ENCODE measurements at regions of chr20 and their contacts with region 1.

Region 1: DNA sequence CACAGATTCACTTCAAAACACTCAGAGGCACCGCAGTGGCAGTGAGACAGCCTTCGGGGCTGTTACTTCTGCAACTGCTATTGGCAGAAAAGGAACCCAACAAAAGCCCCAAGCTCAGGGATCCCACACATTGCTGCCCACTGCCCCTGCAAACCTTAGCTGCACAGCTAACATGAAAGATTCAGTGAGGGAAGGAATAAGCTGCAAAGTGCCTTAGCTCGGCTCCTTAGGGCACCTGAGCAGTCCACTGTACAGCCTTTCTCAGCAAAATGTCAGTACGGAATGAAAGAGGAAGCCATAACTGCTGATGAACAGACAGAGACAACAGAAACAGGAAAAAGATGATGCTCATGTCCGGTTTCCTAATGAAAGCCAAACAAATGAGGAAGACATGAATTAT is 179.7 kb upstream of the SHLD1 start:
- DNase-seq: no peak
- H3K4me3 ChIP-seq: no peak overlapping the region
- H3K27ac ChIP-seq: no peak overlapping the region
- H3K4me1 ChIP-seq: no peaks in the 10 kb centered on the region
- H3K27me3 ChIP-seq: no peaks in the 10 kb centered on the region
- CTCF ChIP-seq: no peak
- POLR2A ChIP-seq: no peak

Region 2: GRCh38 chr20:5658912-5659345 is 88.5 kb after region 1 on chr20:
- intact Hi-C with region 1: no loop called
- DNase-seq: peak; percentile 51
- H3K4me3 ChIP-seq: no peak overlapping the region
- H3K27ac ChIP-seq: no peak overlapping the region
- H3K4me1 ChIP-seq: peaks cover 27% of the 10 kb centered on the region
- H3K27me3 ChIP-seq: no peaks in the 10 kb centered on the region
- CTCF ChIP-seq: no peak
- POLR2A ChIP-seq: no peak

Region 3: GRCh38 chr20:5788385-5788895 is 218.0 kb after region 1 on chr20:
- intact Hi-C with region 1: loop called (anchors 5 kb)
- DNase-seq: peak; percentile 94
- H3K4me3 ChIP-seq: no peak overlapping the region
- H3K27ac ChIP-seq: no peak overlapping the region
- H3K4me1 ChIP-seq: peaks cover 10% of the 10 kb centered on the region
- H3K27me3 ChIP-seq: no peaks in the 10 kb centered on the region
- CTCF ChIP-seq: peak; percentile 85 to 91 (median 86)
- POLR2A ChIP-seq: no peak